HEK293T (cell line): ENCODE measurements at regions of chr3 and their contacts with region 1.

Region 1: DNA sequence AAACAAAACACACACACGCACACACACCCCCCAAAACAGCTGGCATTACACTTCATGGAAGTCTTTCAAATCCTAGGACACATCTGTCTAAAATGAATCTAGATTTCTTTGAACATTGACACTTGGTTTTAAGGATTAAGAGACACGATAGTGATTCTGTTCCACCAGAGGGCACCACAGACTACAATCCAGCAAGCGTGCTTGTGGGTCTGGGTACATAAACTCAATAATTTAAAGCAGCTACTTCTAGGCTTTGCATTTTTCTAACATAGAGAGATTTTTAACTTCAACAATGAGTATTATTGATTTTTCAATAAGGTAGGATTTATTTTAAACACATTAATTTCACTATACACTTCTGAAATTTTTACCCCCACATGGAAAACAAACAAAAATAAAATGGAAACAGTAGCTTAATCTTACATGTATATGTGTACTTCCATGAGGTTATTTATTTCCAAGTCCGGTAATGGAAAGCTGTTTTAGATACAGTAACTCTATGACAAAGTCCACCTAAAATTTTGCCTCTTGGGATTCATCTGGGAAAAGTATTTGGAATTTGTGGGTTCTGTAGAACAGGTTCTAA is 564.0 kb upstream of the TGFBR2 start:
- DNase-seq: peak; percentile 55

Region 2: DNA sequence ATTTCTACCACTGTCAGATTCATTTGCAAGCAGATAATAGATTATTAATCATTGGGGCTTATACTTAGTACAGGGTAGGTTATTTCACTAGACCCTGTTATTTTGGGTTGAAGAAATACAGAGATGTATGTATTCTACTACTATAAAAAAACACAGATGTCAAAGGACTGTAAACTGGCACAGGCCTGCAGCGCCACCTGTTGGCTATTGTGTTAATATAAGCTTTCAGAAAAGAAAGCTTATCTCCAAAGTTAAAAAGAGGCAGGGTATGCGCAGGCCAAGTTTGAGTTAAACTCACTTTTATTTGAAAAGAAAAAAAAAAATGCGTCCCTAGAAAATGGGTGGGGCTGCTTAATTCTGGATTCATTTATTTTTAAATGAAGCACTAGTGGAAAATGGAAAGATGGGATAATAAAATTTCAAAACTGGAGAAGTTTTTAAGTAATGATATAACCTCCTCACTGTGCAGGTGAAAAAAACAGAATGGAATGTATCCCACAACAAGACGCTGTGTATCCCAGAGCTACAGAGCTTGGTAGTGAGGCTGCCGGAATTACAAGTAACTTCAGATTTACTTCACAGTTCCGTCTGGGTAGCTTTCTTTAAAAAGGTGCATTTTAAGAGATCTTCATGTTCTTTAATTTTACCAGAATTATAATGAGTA is 156.9 kb after region 1 on chr3:
- CTCF ChIA-PET with region 1: interaction called, 26 read pairs
- POLR2A ChIA-PET with region 1: interaction called, 4 read pairs
- DNase-seq: peak; percentile 32